ENCODE measurements at regions of chr1 and their contacts with region 1.

Region 1: DNA sequence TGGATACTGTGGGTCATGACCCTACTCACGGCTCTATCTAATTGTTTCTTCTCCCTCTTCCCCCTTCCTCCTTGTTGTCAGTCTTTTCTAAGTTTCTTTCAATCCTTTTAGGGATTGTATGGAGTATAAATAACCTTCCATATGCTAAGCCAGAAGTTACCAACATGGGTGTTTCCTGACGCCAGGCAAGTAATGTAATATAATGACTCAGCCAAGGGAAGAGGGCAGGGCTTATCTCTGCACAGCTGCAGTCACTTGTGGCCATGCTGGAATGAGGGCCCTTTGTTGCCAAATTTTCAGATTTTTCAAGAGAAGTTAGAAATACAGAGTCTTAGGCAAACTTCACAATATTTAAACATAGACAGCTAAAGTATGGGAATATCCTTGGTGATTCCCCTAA is 194.6 kb downstream of the ST6GALNAC3 start:
- DNase-seq: no peak
- H3K4me3 ChIP-seq: no peak overlapping the region
- H3K4me3 Mint-ChIP-seq: peak overlapping the region in 6 of 8 donors; percentile 1 to 77 (median 64)
- H3K27ac ChIP-seq: no peak overlapping the region
- H3K27ac Mint-ChIP-seq: peak overlapping the region in 3 of 7 donors; percentile 11 to 69 (median 30)
- H3K4me1 ChIP-seq: peaks cover 49% of the 10 kb centered on the region
- H3K4me1 Mint-ChIP-seq: peaks cover 32 to 56% (median 49%) of the 10 kb centered on the region in 4 donors
- H3K27me3 ChIP-seq: no peaks in the 10 kb centered on the region
- H3K27me3 Mint-ChIP-seq: no peaks in the 10 kb centered on the region

Region 2: DNA sequence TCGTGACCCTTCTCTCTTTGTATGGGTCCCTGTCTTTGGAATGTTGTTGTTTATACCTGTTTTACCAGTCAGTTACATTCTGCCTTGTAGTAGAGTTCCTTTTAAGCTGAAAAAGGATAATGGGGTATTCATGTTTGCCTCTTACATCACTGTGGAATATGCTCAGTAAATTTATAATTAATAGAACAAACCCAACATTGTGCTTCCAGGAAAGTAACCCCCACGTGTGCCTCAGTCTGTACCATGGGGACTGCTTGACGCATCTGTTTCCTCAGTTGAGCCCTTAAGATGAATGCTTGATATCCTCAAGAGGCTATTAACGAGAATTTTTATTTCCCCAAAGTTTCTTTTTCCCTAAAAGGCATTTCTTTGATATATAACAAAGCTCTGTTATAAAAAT is 121.2 kb before region 1 on chr1:
- CTCF ChIA-PET with region 1: no interaction called
- POLR2A ChIA-PET with region 1: no interaction called
- intact Hi-C with region 1: no loop called
- DNase-seq: no peak
- H3K4me3 ChIP-seq: no peak overlapping the region
- H3K4me3 Mint-ChIP-seq: no peak overlapping the region
- H3K27ac ChIP-seq: no peak overlapping the region
- H3K27ac Mint-ChIP-seq: no peak overlapping the region
- H3K4me1 ChIP-seq: no peaks in the 10 kb centered on the region
- H3K4me1 Mint-ChIP-seq: no peaks in the 10 kb centered on the region
- H3K27me3 ChIP-seq: no peaks in the 10 kb centered on the region
- H3K27me3 Mint-ChIP-seq: peaks cover 5 to 11% of the 10 kb centered on the region in 2 donors

Region 3: DNA sequence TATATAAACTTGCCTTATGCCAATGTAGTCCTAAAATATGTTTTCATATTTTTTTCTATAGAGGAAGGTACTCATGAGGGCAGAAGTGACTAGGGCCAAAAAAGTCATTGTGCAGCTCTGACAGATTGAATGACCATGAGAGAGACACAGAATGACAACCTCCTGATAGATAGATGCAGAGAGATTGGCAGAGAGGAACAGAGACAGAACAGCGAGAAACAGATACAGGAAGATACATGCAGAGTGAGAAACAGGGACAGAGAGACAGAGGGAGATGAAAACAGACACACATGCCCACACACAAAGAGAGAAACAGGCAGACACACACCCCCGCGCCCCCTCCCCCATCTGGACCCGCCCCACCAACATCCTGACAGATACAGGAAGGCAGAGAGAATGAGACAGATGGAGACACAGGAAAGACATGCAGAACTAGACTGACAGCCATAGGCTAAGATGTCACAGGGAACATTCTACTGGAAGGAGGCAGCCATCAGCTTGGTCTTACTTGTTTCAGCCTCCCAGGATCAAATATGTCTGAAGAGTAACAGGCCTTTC is 16.5 kb after region 1 on chr1:
- CTCF ChIA-PET with region 1: interaction called, 3 read pairs
- POLR2A ChIA-PET with region 1: no interaction called
- intact Hi-C with region 1: loop called (anchors 2 kb)
- DNase-seq: peak in 1 of 5 donors; percentile 13
- H3K4me3 ChIP-seq: no peak overlapping the region
- H3K4me3 Mint-ChIP-seq: peak overlapping the region in 5 of 8 donors; percentile 2 to 29 (median 10)
- H3K27ac ChIP-seq: no peak overlapping the region
- H3K27ac Mint-ChIP-seq: peak overlapping the region in 5 of 7 donors; percentile 15 to 86 (median 66)
- H3K4me1 ChIP-seq: peaks cover 48% of the 10 kb centered on the region
- H3K4me1 Mint-ChIP-seq: peaks cover 25 to 41% (median 35%) of the 10 kb centered on the region in 4 donors
- H3K27me3 ChIP-seq: no peaks in the 10 kb centered on the region
- H3K27me3 Mint-ChIP-seq: no peaks in the 10 kb centered on the region

Region 4: GRCh38 chr1:76294482-76295194 is 25.5 kb after region 1 on chr1:
- CTCF ChIA-PET with region 1: interaction called, 4 read pairs
- POLR2A ChIA-PET with region 1: interaction called, 15 read pairs
- intact Hi-C with region 1: no loop called
- DNase-seq: peak in 4 of 5 donors; percentile 32 to 50 (median 40)
- H3K4me3 ChIP-seq: peak overlapping the region; percentile 12 to 13
- H3K4me3 Mint-ChIP-seq: peak overlapping the region; percentile 68 to 86 (median 78)
- H3K27ac ChIP-seq: no peak overlapping the region
- H3K27ac Mint-ChIP-seq: peak overlapping the region; percentile 47 to 85 (median 73)
- H3K4me1 ChIP-seq: peaks cover 86% of the 10 kb centered on the region
- H3K4me1 Mint-ChIP-seq: peaks cover 31 to 62% (median 50%) of the 10 kb centered on the region in 4 donors
- H3K27me3 ChIP-seq: no peaks in the 10 kb centered on the region
- H3K27me3 Mint-ChIP-seq: no peaks in the 10 kb centered on the region

Region 5: GRCh38 chr1:76302711-76303339 is 33.7 kb after region 1 on chr1:
- CTCF ChIA-PET with region 1: interaction called, 4 read pairs
- POLR2A ChIA-PET with region 1: interaction called, 6 read pairs
- intact Hi-C with region 1: loop called (anchors 5 kb)
- DNase-seq: no peak
- H3K4me3 ChIP-seq: no peak overlapping the region
- H3K4me3 Mint-ChIP-seq: peak overlapping the region in 4 of 8 donors; percentile 11 to 55 (median 42)
- H3K27ac ChIP-seq: no peak overlapping the region
- H3K27ac Mint-ChIP-seq: no peak overlapping the region
- H3K4me1 ChIP-seq: peaks cover 52% of the 10 kb centered on the region
- H3K4me1 Mint-ChIP-seq: peaks cover 12 to 26% (median 18%) of the 10 kb centered on the region in 4 donors
- H3K27me3 ChIP-seq: no peaks in the 10 kb centered on the region
- H3K27me3 Mint-ChIP-seq: no peaks in the 10 kb centered on the region